Left colon (tissue), 2 donors: ENCODE measurements at regions of chr10 and their contacts with region 1.

Region 1: GRCh38 chr10:3043512-3044368 is 23.6 kb upstream of the PFKP start:
- DNase-seq: peak; percentile 55 to 77
- ATAC-seq: peak; percentile 91

Region 2: GRCh38 chr10:2927958-2928840 is 115.5 kb before region 1 on chr10:
- intact Hi-C with region 1: loop called in 1 of 2 experiments (anchors 10 kb)
- DNase-seq: peak; percentile 42 to 85
- ATAC-seq: peak; percentile 86